Right ventricle myocardium inferior (tissue), 1 donor: ENCODE measurements at regions of chr11 and their contacts with region 1.

Region 1: DNA sequence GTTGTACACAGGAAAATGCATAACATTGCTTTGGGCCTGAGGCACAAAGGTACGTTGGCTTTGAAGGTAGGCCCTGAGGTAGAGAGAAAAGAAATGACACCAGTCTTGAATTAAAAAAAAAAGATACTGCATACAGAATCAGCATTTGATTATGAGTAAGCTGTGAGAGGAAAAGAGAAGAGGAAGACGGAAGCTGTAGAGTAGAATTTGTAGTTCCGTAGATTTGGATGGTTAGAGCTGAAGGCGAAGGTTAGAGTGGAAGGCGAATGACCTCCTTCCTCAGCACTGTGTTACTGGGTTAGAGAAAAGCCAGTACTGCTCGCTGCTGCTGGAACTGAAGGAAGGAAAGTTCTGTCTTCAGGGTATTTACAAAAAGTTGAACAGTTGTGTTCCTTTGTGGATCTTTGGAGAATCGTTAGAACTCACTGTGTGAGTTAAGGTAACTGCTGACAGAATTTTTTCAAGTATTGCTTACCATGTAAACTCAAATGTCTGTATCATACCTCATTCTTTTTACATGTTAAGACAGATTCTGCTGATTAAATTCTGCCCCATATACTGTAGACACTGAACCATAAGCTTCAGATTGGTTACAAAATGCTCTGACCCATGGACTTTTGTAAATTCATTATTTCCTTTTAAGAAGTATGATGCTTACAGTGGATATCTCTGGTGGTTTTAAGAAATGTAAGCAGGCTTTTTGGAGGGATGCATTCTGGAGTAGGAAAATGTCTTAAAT is 50.2 kb downstream of the MCAM start:
- DNase-seq: no peak
- ATAC-seq: no peak

Region 2: DNA sequence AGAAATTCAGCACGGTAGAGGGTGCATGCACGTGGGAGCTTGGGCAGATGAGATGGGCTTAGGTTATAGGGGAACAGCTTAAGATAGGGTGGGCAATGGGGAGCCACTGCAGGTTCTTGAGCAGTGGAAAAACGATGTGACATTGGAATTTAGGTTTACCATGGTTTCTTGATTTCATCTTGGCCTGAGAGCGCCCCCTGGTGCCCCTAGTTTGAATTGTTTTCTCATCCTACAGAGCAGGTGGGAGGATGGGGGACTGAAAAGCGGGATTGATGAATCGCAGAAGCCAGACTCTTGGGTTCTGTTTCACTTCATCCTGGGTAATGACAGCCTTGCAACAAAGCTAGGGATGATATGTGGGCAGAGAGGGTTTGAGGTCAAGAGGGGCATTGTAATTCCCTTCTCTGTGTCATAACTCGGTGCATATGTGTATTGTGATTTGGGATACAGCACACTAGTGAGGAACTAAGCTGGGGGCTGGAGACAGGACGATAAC is 56.9 kb after region 1 on chr11:
- intact Hi-C with region 1: loop called (anchors 5 kb)
- DNase-seq: peak; percentile 85
- ATAC-seq: no peak

Region 3: DNA sequence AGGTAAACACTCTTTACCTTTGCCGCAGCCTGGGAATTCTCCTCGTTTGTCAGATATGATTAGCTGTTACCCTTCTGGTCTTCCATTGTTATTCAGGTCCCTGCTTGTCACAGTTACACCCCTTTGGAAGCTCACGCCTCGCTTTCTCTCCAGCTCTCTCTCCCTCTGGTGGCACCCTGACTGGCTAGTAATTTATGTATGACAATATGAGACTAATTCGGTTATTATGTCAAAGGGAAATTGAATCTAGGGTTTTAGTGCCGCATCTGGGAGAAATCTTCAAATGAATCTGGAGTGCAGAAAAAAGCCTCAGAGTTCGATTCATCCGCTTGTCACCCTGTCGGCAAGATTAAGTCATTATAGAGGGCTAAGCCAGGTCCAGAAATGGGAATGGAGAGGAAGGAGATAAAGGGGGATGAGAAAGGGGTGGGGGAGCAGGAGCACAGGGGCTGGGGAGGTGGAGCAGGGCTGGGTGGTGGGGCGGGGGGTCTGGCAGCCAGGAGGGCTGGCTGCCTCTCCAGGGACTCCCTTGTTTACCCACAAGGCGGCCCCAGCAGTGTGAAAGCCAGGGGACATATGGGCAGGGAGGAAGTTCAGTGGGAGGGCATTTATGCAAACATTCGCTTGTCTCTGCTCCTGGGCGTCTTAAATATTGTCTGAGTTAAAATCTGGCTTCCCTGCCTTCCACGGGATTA is 641.3 kb after region 1 on chr11:
- intact Hi-C with region 1: no loop called
- DNase-seq: no peak
- ATAC-seq: no peak